ENCODE measurements at regions of chr5 and their contacts with region 1.

Region 1: GRCh38 chr5:154179846-154180710 is 10.5 kb upstream of the GALNT10 start:
- DNase-seq: no peak
- ATAC-seq: peak; percentile 92 to 95 (median 93)
- H3K4me3 ChIP-seq: no peak overlapping the region
- H3K27ac ChIP-seq: no peak overlapping the region
- H3K4me1 ChIP-seq: no peaks in the 10 kb centered on the region
- H3K27me3 ChIP-seq: no peaks in the 10 kb centered on the region
- CTCF ChIP-seq: peak; percentile 72 to 78 (median 75)
- POLR2A ChIP-seq: no peak

Region 2: GRCh38 chr5:153926201-153926600 is 253.9 kb before region 1 on chr5:
- intact Hi-C with region 1: no loop called
- DNase-seq: no peak
- ATAC-seq: no peak
- H3K4me3 ChIP-seq: no peak overlapping the region
- H3K27ac ChIP-seq: no peak overlapping the region
- H3K4me1 ChIP-seq: no peaks in the 10 kb centered on the region
- H3K27me3 ChIP-seq: no peaks in the 10 kb centered on the region
- CTCF ChIP-seq: no peak
- POLR2A ChIP-seq: no peak

Region 3: DNA sequence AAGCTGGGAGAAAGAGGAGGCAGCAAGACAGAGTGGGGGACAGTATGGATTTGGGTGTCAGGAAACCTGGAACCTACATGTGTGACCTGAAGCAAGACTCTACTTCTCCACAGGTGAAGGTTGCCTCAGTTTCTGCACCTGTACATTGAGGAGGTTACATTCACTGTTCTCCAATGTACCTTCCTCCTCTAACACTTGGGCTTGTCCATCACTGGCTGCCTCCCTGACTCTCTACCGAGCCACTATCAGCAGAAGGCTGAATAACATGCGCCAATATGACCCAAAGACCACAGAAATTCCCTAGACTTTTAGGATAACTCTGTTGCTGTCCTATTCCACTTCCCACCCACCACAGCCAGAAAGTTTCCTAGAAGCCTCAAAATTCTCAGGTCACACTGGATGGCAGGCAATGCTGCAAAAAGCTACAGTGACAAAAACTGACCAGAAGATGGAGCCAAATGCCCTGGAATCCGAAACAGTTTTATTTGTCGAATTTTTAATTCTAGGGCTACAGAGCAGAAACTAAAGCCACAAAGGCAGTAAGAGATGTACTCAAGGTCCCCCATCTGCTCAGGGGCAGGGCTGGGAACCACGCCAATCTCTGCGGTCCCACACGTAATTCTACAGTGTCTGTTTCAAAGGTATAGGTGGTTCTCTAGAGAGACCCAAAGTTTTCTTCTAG is 205.8 kb before region 1 on chr5:
- intact Hi-C with region 1: loop called in 1 of 2 experiments (anchors 10 kb)
- DNase-seq: no peak
- ATAC-seq: peak in 3 of 4 donors; percentile 77 to 87 (median 82)
- H3K4me3 ChIP-seq: no peak overlapping the region
- H3K27ac ChIP-seq: no peak overlapping the region
- H3K4me1 ChIP-seq: no peaks in the 10 kb centered on the region
- H3K27me3 ChIP-seq: no peaks in the 10 kb centered on the region
- CTCF ChIP-seq: peak; percentile 63 to 74 (median 70)
- POLR2A ChIP-seq: no peak

Region 4: DNA sequence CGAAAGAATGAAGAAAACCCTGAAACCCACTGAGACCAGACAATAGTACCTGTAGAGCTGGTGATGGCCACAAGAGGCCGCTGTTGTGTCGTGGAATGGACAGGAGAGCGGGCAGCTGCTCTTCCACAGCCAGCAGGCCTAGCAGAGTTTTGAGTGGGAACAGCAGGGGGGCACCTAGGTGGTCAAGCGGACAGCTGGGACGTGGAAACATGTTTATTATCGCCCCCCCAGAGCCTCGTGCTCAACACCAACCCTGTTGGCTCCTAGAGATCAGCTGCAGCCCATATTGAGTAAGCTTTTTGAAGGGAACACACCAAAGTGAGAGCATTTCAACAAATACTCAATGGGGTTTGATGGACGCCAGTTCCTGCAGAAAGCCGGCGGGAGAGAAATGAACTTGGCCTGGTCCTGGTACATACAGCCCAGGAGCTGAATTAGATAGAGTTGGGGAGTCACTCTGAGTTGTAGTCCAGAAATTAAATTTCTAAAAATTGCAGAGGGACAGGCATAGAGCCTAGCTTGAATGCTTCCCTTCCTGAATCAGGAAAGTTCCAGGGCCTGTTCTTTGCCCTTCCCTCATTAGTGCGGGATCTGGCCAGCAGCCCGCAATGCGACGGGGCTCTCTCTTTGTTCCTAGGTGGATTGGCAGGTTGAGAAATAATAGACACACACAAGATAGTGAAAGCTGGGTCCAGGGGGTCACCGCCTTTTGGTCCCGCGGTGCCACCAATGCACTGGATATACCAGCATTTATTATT is 107.5 kb before region 1 on chr5:
- intact Hi-C with region 1: loop called in 1 of 2 experiments (anchors 2 kb)
- DNase-seq: peak; percentile 82 to 87 (median 83)
- ATAC-seq: peak; percentile 98 to 100 (median 99)
- H3K4me3 ChIP-seq: no peak overlapping the region
- H3K27ac ChIP-seq: no peak overlapping the region
- H3K4me1 ChIP-seq: peaks cover 0 to 16% (median 0%) of the 10 kb centered on the region in 4 donors
- H3K27me3 ChIP-seq: no peaks in the 10 kb centered on the region
- CTCF ChIP-seq: peak; percentile 90 to 92 (median 91)
- POLR2A ChIP-seq: no peak

Region 5: DNA sequence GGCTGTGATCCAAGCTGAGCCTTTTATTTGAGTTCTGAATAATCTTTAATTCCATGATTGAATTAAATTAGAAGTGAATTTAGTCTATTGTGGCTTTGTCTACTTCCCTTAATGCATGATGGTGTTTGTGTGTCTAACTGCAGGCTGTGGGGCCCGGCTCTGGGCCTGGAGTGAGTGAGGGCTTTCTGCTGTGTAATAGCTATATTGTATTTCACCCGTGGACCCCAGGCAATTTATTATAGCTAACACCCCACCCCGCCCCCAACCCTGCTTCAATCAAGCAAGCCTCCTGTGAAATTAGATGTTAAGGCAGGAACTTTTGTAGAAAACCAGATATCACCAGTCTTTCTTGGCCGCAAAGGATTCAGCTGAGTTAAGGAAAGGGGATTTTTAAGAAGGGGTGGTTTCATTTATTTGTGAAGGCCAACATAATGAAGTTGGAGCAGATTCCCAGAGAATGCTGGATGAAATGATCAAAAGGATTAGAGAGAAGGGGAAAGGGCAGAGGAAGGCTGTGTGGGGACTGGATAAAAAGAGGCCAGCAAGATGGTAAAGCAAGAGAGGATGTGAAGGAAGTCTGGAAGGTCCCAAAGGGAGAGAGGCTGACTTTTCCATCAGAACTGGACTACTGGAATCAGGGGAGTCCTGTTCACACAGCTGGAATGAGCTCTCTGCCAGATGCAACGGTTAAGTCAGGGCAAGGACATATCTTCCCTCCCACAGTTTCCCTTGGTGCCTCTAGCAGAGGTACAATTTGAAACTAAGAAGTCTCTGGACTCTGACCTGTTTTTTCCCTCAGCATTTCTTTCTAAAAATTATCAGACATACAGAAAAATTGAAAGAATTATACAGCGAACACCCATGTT is 140.4 kb after region 1 on chr5:
- intact Hi-C with region 1: no loop called
- DNase-seq: no peak
- ATAC-seq: no peak
- H3K4me3 ChIP-seq: no peak overlapping the region
- H3K27ac ChIP-seq: no peak overlapping the region
- H3K4me1 ChIP-seq: no peaks in the 10 kb centered on the region
- H3K27me3 ChIP-seq: no peaks in the 10 kb centered on the region
- CTCF ChIP-seq: no peak
- POLR2A ChIP-seq: no peak

Region 6: DNA sequence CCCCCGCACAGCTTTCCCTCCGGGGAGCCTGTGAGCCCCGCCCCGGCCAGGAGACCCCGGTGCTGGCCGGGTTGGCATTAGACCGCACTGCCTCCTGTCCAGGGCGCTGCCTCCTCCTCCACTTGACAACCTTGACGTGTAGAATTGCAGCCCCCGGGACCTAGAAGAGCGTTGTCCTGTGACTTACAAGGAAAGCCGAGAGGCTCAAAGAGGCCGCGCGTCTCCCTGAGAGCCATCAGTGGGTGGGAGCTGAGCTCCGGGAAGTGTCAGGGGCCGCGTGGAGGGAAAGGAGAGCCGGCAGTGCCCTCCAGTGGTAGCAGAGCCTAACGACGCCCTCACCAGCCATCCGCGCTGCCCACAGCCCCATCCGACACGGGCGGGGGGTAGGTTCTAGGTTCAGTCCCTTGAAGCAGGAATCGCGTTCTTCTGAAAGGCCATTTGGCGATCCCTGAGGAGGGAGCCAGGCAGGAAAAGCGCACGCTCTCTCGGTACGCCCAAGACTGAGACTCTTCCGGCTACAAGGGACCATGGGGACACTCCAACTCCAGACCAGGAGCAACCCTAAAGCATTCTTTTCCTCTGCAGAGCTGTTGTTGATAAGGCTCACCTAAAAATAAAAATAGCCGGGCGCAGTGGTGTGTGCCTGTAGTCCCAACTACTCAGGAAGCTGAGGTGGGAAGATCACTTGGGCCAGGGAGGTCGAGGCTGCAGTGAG is 225.2 kb after region 1 on chr5:
- intact Hi-C with region 1: loop called in 1 of 2 experiments (anchors 10 kb)
- DNase-seq: peak; percentile 74 to 81 (median 81)
- ATAC-seq: peak; percentile 98 to 100 (median 99)
- H3K4me3 ChIP-seq: peak overlapping the region; percentile 7 to 32 (median 18)
- H3K27ac ChIP-seq: no peak overlapping the region
- H3K4me1 ChIP-seq: peaks cover 0 to 7% (median 0%) of the 10 kb centered on the region in 4 donors
- H3K27me3 ChIP-seq: no peaks in the 10 kb centered on the region
- CTCF ChIP-seq: peak; percentile 84 to 93 (median 87)
- POLR2A ChIP-seq: no peak